Endothelial cell of umbilical vein (primary cell): ENCODE measurements at regions of chr4 and their contacts with region 1.

Region 1: DNA sequence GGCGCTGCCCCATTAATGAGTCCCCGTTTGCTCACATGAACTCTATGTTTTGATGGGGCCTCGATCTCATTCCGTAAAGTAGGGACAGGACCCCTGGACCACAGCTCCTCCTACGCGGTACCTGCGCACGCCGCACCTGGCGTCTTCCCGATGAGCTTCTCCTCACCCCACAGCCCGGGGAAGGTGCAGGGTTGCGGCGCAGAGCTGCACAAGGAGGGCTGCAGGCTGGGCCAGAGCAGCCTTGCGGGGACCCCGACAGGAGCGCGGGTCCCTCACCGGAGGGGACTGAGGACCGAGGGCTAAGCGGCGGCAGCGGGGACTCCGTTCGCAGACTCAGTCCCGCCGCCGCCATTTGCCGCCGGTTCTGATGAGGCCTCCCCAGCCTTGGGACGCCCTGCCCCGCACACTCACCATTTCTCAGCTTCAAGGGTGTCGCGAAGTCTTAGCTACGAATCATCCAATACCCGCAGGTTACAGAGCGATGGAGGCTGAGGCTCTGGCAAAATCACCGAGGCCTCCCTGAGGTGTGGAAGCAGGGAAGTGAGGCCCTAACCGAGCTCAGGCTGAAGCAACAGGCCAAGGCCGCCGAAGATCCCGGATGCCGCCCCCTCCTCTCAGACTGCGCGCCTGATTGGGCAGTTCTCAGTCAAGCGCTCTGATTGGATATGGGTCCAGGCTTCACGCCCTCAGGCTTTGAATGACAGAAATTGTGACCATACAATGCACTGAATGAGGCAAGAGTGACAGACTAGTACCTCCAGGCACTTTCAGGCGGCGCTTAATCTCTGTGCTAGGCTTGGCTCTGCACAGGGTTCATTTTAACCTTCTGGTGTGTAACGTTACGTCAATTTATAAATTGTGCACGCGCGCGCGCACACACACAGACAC is 25.1 kb downstream of the ZNF721 start:
- DNase-seq: peak; percentile 100
- H3K4me3 ChIP-seq: peak overlapping the region; percentile 8 to 91 (median 65)
- H3K27ac ChIP-seq: peak overlapping the region; percentile 55
- H3K4me1 ChIP-seq: peaks cover 7% of the 10 kb centered on the region
- H3K27me3 ChIP-seq: no peaks in the 10 kb centered on the region
- CTCF ChIP-seq: no peak
- POLR2A ChIP-seq: peak; percentile 90

Region 2: GRCh38 chr4:124275-125081 is 349.3 kb before region 1 on chr4 and contains the start of gene ZNF718:
- CTCF ChIA-PET with region 1: no interaction called
- POLR2A ChIA-PET with region 1: no interaction called
- dilution Hi-C with region 1: no loop called
- intact Hi-C with region 1: loop called (anchors 5 kb)
- DNase-seq: peak; percentile 98
- H3K4me3 ChIP-seq: peak within 1 kb of the TSS; percentile 48 to 65 (median 62)
- H3K27ac ChIP-seq: peak within 1 kb of the TSS; percentile 44
- H3K4me1 ChIP-seq: peaks cover 7% of the 10 kb centered on the region
- H3K27me3 ChIP-seq: no peaks in the 10 kb centered on the region
- CTCF ChIP-seq: no peak
- POLR2A ChIP-seq: peak; percentile 78
- total RNA-seq, gene ZNF718: 5.1 and 12.1 TPM in 2 replicates

Region 3: GRCh38 chr4:256492-256891 is 217.3 kb before region 1 on chr4:
- CTCF ChIA-PET with region 1: no interaction called
- POLR2A ChIA-PET with region 1: no interaction called
- dilution Hi-C with region 1: no loop called
- intact Hi-C with region 1: no loop called
- DNase-seq: no peak
- H3K4me3 ChIP-seq: no peak overlapping the region
- H3K27ac ChIP-seq: no peak overlapping the region
- H3K4me1 ChIP-seq: no peaks in the 10 kb centered on the region
- H3K27me3 ChIP-seq: no peaks in the 10 kb centered on the region
- CTCF ChIP-seq: no peak
- POLR2A ChIP-seq: no peak

Region 4: GRCh38 chr4:304969-305680 is 168.7 kb before region 1 on chr4 and contains the start of gene ZNF732:
- CTCF ChIA-PET with region 1: no interaction called
- POLR2A ChIA-PET with region 1: no interaction called
- dilution Hi-C with region 1: no loop called
- intact Hi-C with region 1: no loop called
- DNase-seq: peak; percentile 27
- H3K4me3 ChIP-seq: peak within 1 kb of the TSS; percentile 14 to 36 (median 19)
- H3K27ac ChIP-seq: no peak within 1 kb of the TSS
- H3K4me1 ChIP-seq: no peaks in the 10 kb centered on the region
- H3K27me3 ChIP-seq: peaks cover 1 to 2% of the 10 kb centered on the region in 2 experiments
- CTCF ChIP-seq: no peak
- POLR2A ChIP-seq: no peak
- total RNA-seq, gene ZNF732: 1.3 and 3.1 TPM in 2 replicates

Region 5: GRCh38 chr4:499577-499976 is 25.8 kb after region 1 on chr4:
- CTCF ChIA-PET with region 1: no interaction called
- POLR2A ChIA-PET with region 1: no interaction called
- dilution Hi-C with region 1: no loop called
- intact Hi-C with region 1: loop called (anchors 1 kb)
- DNase-seq: no peak
- H3K4me3 ChIP-seq: peak overlapping the region; percentile 75 to 90 (median 80)
- H3K27ac ChIP-seq: peak overlapping the region; percentile 68
- H3K4me1 ChIP-seq: peaks cover 11% of the 10 kb centered on the region
- H3K27me3 ChIP-seq: no peaks in the 10 kb centered on the region
- CTCF ChIP-seq: no peak
- POLR2A ChIP-seq: no peak

Region 6: GRCh38 chr4:519203-519651 is 45.4 kb after region 1 on chr4:
- CTCF ChIA-PET with region 1: no interaction called
- POLR2A ChIA-PET with region 1: no interaction called
- dilution Hi-C with region 1: no loop called
- intact Hi-C with region 1: no loop called
- DNase-seq: no peak
- H3K4me3 ChIP-seq: no peak overlapping the region
- H3K27ac ChIP-seq: no peak overlapping the region
- H3K4me1 ChIP-seq: no peaks in the 10 kb centered on the region
- H3K27me3 ChIP-seq: no peaks in the 10 kb centered on the region
- CTCF ChIP-seq: no peak
- POLR2A ChIP-seq: no peak

Region 7: DNA sequence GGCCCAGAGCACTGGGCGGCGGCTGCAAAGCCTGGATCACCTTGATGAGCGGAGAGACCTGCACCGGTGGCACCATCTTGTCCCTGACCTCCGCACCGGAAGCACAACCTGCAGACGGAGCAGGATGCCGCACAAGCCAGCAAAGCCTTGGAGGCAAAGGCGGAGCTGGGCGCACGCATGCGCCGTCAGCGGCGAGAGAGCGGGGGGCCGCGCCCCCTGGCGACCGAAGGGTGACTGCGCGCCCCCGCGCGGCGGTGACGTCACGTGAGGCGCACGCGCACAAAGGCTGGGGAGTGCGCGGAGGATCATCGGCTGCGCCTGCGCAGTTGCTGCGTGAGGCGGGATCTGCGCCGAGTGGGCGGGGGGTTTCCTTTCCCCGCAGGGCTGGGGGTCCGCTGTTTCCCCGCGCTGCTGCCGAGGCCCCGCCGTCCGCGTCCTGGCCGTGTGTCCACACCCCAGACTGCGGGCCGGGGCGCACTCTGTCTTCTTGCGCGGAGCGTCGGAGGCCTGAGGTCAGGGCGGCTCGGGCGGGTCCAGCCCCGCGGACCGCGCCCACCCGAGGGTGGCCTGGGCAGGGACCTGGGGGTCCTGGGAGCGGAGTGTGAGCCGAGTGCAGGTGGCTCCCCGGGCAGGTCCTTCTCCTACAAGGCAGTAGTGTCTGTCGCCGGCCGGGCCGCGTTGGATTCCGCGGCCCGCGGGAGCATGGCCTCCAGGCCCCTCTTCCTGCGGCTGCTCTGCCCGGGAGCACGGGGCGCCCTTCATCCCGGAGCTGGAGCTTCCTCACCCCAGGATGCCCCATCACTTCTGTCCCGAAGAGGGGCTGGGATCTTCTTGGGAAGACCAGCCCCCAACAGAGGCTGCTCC is 200.6 kb after region 1 on chr4 and contains the starts of genes ATP5ME and MYL5:
- CTCF ChIA-PET with region 1: no interaction called
- POLR2A ChIA-PET with region 1: no interaction called
- dilution Hi-C with region 1: no loop called
- intact Hi-C with region 1: loop called (anchors 10 kb)
- DNase-seq: peak; percentile 99
- H3K4me3 ChIP-seq: peak within 1 kb of the TSS; percentile 64 to 87 (median 78)
- H3K27ac ChIP-seq: peak within 1 kb of the TSS; percentile 67
- H3K4me1 ChIP-seq: peaks cover 12% of the 10 kb centered on the region
- H3K27me3 ChIP-seq: no peaks in the 10 kb centered on the region
- CTCF ChIP-seq: peak; percentile 97 to 100
- POLR2A ChIP-seq: peak; percentile 83
- total RNA-seq, gene ATP5ME: 303 and 310 TPM in 2 replicates
- total RNA-seq, gene MYL5: 13.4 and 15.5 TPM in 2 replicates